Heart right ventricle (tissue), 16 donors: ENCODE measurements at regions of chr3 and their contacts with region 1.

Region 1: DNA sequence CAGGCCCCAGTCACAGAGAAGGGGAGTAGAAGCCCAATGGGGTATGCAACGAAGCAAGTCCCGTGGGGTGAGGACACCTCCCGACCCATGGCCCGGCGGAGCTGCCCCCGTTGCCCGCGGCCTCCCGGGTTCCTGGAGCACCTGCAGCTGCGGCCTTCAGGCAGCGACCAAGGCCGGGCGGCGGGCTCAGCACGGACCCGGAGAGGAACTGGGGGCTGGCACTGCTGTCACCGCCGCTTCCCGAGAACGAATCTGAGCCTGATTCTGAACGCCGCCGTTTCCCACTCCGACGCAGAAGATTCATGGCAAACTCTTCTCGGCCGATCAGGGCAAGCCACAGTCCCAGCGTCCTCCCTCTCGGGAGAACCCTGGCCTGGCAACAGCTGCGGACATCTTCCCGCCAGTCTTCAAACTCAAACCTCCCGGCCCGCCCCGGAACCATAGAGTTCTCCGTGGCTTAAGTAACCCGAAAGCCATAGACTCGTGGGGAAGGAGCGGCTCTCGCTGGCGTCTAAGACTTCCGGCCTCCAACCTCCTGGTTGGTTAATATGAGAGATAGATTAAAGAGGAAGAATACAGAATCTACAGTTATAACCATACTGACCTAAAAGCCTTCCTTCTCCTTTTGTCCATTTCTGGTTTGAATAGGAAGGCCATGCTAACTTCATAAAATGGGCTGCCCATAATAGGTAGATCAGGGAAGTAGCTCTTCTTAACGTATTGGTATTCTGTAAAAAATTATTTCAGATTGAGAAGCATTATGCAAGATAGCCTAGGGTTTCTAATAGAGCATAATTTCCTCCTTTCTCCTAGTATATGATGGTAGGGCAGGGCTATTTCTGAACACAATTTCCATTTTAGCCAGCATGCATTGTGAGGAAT is at the start of gene POLQ:
- DNase-seq: peak; percentile 82 to 93
- ATAC-seq: peak; percentile 97 to 100 (median 99)
- H3K4me3 ChIP-seq: peak within 1 kb of the TSS; percentile 36 to 75 (median 64)
- H3K27ac ChIP-seq: peak within 1 kb of the TSS in 9 of 10 donors; percentile 17 to 86 (median 74)
- H3K4me1 ChIP-seq: peaks cover 0 to 18% (median 7%) of the 10 kb centered on the region in 9 donors
- H3K27me3 ChIP-seq: no peaks in the 10 kb centered on the region
- CTCF ChIP-seq: no peak
- total RNA-seq, gene POLQ: 0.25 to 0.93 (median 0.46) TPM

Region 2: DNA sequence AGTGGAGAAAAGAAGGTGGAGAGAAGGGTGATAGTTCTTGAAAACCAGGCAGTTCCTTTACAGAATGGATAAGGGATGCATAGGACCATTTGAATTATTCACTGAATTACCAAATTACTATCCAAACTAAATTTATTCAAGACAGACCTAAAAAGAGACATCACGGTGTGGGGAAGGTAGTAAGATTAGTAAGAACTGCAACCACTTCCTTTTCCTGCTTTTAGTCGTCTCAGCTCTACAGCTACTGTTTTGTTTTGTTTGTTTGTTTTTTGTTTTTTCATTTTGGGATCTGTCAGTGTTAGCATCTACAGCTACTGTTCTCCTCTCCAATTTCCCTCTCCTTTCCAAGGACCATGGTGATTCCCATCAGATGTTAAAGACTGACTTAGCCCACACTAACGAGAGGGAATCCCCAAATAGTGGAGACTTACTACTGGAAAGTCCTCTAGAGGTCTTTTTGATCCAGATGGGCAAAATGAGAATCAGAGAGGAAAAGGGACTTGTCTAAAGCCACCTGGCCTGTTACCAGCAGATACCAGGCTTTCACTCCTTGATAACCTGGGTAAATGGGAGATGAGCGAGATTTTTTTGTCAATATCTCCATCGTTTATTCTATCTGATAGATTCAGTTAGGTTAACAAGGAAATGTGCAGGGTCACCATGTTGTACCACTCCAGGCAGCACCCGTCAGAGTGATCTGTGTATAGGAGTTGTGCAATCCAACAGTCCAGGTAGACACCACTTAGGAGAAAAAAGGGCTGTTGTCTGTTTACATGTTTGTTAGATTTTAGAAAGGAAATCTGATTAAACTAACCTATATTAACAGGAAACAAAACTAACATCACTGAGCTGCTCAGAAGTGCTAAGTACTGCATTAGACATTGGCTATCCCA is 108.9 kb after region 1 on chr3:
- intact Hi-C with region 1: loop called in 5 of 10 experiments (anchors 2 to 10 kb)
- DNase-seq: no peak
- ATAC-seq: no peak
- H3K4me3 ChIP-seq: no peak overlapping the region
- H3K27ac ChIP-seq: peak overlapping the region in 1 of 10 donors; percentile 63
- H3K4me1 ChIP-seq: peaks cover 0 to 54% (median 10%) of the 10 kb centered on the region in 9 donors
- H3K27me3 ChIP-seq: no peaks in the 10 kb centered on the region
- CTCF ChIP-seq: no peak

Region 3: GRCh38 chr3:121995161-121996137 is 449.6 kb after region 1 on chr3:
- intact Hi-C with region 1: loop called in 7 of 10 experiments (anchors 5 to 10 kb)
- DNase-seq: peak; percentile 22 to 44
- ATAC-seq: peak; percentile 56 to 80 (median 72)
- H3K4me3 ChIP-seq: no peak overlapping the region
- H3K27ac ChIP-seq: peak overlapping the region in 5 of 10 donors; percentile 14 to 84 (median 41)
- H3K4me1 ChIP-seq: peaks cover 0 to 56% (median 0%) of the 10 kb centered on the region in 9 donors
- H3K27me3 ChIP-seq: no peaks in the 10 kb centered on the region
- CTCF ChIP-seq: peak in 8 of 9 donors; percentile 18 to 66 (median 50)

Region 4: GRCh38 chr3:122012821-122013220 is 467.0 kb after region 1 on chr3:
- intact Hi-C with region 1: no loop called
- DNase-seq: no peak
- ATAC-seq: no peak
- H3K4me3 ChIP-seq: no peak overlapping the region
- H3K27ac ChIP-seq: no peak overlapping the region
- H3K4me1 ChIP-seq: no peaks in the 10 kb centered on the region
- H3K27me3 ChIP-seq: peaks cover 0 to 19% (median 0%) of the 10 kb centered on the region in 7 donors
- CTCF ChIP-seq: no peak

Region 5: DNA sequence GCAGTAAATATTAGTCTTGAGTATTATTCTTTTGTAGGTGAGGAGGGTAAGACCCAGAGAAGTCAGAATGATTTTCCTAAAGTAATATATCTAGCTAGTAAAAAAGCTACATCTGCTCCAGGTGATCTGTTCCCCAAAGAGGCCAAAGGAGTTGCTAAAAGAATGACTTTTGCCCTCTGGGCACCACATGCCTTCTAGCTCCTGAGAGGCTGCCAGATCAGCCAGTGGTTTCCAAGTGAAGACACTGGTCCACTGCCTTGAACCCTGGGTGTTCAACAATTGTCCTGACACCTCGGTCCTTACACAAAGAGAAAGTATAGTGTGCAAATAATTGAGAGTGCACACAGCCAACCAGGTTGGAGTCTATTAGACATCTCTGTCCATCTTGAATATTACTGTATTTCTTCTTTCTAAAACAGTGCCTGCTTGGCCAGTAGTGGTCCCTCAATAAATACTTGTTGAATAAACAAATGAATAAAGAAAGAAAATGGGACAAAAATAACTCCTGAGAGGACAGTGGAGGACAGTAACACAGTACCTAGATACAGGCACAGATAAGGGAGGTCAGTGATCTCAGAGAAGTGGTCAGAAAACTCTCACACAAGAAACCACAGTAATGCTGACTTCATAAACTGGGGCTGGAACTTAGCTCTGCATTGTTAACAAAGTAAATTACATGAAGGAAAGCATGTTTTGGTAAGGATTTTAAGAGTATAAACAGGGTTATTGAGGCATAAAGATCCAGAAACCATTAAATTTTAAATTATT is 722.6 kb after region 1 on chr3:
- intact Hi-C with region 1: loop called in 3 of 10 experiments (anchors 5 to 10 kb)
- DNase-seq: no peak
- ATAC-seq: no peak
- H3K4me3 ChIP-seq: no peak overlapping the region
- H3K27ac ChIP-seq: no peak overlapping the region
- H3K4me1 ChIP-seq: peaks cover 0 to 22% (median 0%) of the 10 kb centered on the region in 9 donors
- H3K27me3 ChIP-seq: peaks cover 0 to under 1% (median 0%) of the 10 kb centered on the region in 7 donors
- CTCF ChIP-seq: no peak

Region 6: GRCh38 chr3:122383771-122384697 is 838.2 kb after region 1 on chr3 and contains the start of gene FAM162A:
- intact Hi-C with region 1: loop called in 1 of 10 experiments (anchors 5 kb)
- DNase-seq: peak; percentile 93 to 95
- ATAC-seq: peak; percentile 98 to 99 (median 98)
- H3K4me3 ChIP-seq: peak within 1 kb of the TSS; percentile 57 to 88 (median 74)
- H3K27ac ChIP-seq: peak within 1 kb of the TSS; percentile 69 to 94 (median 90)
- H3K4me1 ChIP-seq: peaks cover 0 to 39% (median 23%) of the 10 kb centered on the region in 9 donors
- H3K27me3 ChIP-seq: no peaks in the 10 kb centered on the region
- CTCF ChIP-seq: peak in 8 of 9 donors; percentile 46 to 84 (median 60)
- total RNA-seq, gene FAM162A: 111 to 162 (median 131) TPM

Region 7: DNA sequence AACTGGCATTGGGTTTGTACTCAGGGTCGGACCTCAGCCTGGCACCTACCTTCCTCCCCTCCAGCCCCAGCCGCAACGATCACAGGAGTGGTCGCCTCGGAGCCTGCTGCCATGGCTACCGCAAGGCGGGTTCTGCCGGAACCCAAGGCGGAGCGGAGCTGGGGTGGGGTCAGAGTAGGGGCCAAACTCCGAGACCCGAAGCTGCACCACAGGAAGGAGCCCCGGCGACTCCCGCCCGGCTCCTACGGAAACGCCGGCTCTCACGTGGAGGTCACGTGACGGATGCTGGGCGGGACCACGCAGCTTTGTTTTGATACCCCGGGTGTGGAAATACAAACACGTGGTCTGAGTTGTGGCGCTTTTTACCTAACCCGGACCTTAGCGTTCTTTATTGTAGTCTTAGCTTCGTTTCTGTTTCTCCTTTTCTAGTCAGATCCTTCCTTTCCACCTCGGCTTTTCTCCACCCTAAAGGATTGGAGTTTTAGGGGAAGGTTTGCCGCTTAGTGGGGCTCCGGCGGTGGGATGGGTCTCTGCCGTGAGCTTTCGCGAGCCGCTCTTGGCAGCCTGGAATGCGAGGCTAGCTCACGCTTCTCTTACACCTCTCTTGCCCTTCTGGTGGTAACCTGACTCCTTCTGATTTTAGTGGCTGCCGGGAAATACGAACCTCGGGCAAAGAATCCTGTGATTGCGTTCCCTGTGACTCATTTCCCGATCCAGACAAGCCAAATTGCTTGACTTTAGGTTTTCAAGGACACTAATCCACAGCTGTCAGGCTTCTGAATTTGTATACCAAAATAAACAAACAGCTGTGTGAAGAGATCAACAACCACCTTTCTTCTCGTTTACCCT is 1248.0 kb after region 1 on chr3 and contains the start of gene HSPBAP1:
- intact Hi-C with region 1: loop called in 1 of 10 experiments (anchors 5 kb)
- DNase-seq: peak; percentile 91 to 94
- ATAC-seq: peak; percentile 76 to 95 (median 88)
- H3K4me3 ChIP-seq: peak within 1 kb of the TSS; percentile 47 to 96 (median 84)
- H3K27ac ChIP-seq: peak within 1 kb of the TSS; percentile 83 to 98 (median 95)
- H3K4me1 ChIP-seq: peaks cover 0 to 63% (median 19%) of the 10 kb centered on the region in 9 donors
- H3K27me3 ChIP-seq: no peaks in the 10 kb centered on the region
- CTCF ChIP-seq: no peak
- total RNA-seq, gene HSPBAP1: 2.7 to 6.8 (median 4.0) TPM